ENCODE measurements at regions of chr14 and their contacts with region 1.

Region 1: GRCh38 chr14:73124180-73124894 is 12.0 kb upstream of the PSEN1 start:
- DNase-seq: no peak
- H3K4me3 ChIP-seq: no peak overlapping the region
- H3K4me1 ChIP-seq: peaks cover 15% of the 10 kb centered on the region
- H3K27me3 ChIP-seq: no peaks in the 10 kb centered on the region

Region 2: DNA sequence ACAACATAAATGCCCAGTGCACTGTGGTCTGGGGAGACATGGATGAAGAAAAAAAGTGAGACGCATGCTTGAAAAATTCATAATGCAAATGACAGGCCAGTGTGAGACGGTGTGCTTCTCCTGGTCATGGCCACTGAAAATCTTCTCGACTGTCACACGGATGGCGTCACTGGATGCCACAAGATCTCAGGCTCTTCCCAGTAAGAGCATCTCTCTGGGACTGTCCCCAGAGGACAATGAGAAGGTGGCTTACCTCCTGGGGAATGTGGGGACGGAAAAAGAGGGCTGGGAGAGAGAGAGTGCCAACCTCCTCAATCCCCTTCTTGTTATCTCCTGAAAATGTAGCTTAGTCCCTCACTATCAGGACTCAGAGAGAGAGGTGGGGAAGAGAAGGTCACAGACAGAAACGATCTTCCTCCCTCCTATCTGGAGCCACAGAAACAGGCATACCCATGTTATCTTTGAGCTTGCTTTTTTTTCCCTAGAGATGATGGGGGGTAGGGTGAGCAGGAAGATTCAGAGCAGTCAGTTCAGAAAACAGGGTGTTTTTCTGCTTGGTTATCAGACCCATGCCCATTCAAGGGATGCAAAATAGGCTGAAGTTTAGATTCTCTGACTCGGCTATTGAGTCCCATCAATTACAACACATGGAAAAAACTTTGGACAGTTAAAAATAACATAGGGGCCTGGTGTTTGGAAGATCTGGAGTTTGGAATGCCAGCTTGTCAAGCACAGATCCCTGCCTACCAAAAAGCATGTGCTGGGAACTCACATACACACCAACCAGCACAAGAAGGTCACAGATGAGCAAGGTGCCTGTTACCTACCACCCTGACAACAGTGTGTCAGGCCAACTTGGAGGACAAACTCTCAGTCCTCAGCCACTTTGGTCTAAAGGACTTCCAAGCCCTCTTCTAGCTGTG is 254.7 kb before region 1 on chr14:
- in situ Hi-C with region 1: no loop called
- DNase-seq: no peak
- H3K4me3 ChIP-seq: no peak overlapping the region
- H3K4me1 ChIP-seq: no peaks in the 10 kb centered on the region
- H3K27me3 ChIP-seq: no peaks in the 10 kb centered on the region

Region 3: DNA sequence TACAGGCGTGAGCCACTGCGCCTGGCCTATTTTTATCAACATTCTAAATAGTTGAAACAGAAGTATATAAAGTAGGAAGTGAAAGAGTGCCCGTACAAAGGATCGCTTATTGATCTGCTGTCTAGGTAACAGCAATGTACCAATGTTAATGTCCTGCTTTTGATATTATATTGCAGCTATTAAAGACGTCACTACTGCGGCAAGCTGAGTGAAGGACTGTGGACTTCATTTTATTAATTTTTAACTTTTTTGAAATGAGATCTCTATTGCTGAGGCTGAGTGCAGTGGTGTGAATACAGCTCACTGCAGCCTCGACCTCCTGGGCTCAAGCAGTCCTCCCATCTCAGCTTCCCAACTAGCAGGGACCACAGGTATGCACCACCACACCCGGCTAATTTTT is 738.1 kb after region 1 on chr14:
- in situ Hi-C with region 1: no loop called
- DNase-seq: no peak
- H3K4me3 ChIP-seq: no peak overlapping the region
- H3K4me1 ChIP-seq: no peaks in the 10 kb centered on the region
- H3K27me3 ChIP-seq: no peaks in the 10 kb centered on the region

Region 4: DNA sequence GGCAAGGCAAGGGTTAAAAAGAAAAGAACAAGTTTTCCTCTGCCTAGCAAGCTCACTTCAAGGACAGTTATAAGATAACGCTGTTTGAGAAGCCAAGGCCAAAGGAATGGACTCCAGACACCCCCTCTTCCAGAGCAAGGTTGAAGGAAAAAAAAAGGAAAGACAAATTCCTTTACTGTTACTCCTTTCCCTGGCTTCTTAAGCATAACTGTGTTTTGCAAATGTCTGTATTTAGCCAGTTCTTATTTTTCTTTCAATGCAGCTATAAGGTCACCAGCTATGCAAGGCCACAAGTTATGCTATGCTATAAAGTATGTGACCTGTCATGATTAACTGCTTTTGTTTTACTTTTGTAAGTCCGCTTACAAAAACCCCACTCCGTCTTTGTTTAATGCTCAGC is 788.9 kb after region 1 on chr14:
- in situ Hi-C with region 1: loop called (anchors 25 kb)
- DNase-seq: no peak
- H3K4me3 ChIP-seq: no peak overlapping the region
- H3K4me1 ChIP-seq: no peaks in the 10 kb centered on the region
- H3K27me3 ChIP-seq: no peaks in the 10 kb centered on the region

Measured in HAP-1 (cell line).